ENCODE measurements at regions of chr1 and their contacts with region 1.

Region 1: GRCh38 chr1:223545343-223545742 is 120.2 kb downstream of the CAPN8 start:
- DNase-seq: no peak
- ATAC-seq: no peak
- H3K4me3 ChIP-seq: no peak overlapping the region
- H3K4me3 Mint-ChIP-seq: no peak overlapping the region
- H3K27ac ChIP-seq: no peak overlapping the region
- H3K27ac Mint-ChIP-seq: no peak overlapping the region
- H3K4me1 ChIP-seq: peaks cover 5% of the 10 kb centered on the region
- H3K4me1 Mint-ChIP-seq: peaks cover 1% of the 10 kb centered on the region
- H3K27me3 ChIP-seq: no peaks in the 10 kb centered on the region
- H3K27me3 Mint-ChIP-seq: no peaks in the 10 kb centered on the region
- CTCF ChIP-seq: no peak

Region 2: GRCh38 chr1:223500560-223501425 is 44.5 kb before region 1 on chr1:
- CTCF ChIA-PET with region 1: no interaction called
- POLR2A ChIA-PET with region 1: no interaction called
- intact Hi-C with region 1: no loop called
- DNase-seq: no peak
- ATAC-seq: no peak
- H3K4me3 ChIP-seq: no peak overlapping the region
- H3K4me3 Mint-ChIP-seq: no peak overlapping the region
- H3K27ac ChIP-seq: no peak overlapping the region
- H3K27ac Mint-ChIP-seq: no peak overlapping the region
- H3K4me1 ChIP-seq: no peaks in the 10 kb centered on the region
- H3K4me1 Mint-ChIP-seq: peaks cover 6% of the 10 kb centered on the region
- H3K27me3 ChIP-seq: no peaks in the 10 kb centered on the region
- H3K27me3 Mint-ChIP-seq: no peaks in the 10 kb centered on the region
- CTCF ChIP-seq: no peak

Region 3: DNA sequence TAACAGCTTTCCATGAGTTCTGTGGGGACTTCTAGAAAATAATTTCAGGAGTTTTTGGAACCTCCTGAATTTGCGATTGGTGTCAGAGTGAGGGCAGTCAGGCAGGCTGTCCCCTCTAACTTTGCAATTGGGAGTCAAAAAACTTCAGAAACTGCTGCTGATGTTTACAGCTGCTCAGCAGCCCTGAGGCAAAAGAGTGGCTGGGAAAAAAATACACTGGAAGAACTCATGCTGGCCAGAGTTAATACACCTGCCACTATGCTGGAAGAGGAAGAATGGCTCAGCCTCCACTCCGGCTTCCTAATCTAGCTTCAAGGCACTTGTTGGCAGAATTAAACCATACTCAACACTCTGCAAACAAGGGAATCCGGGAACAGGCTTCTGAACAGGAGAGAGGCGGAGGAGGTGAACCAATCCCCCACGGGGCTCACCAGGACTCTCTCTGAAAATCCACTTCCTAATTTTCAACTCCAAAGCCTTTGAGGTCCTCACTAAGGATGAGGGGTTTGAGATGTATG is 32.1 kb before region 1 on chr1:
- CTCF ChIA-PET with region 1: no interaction called
- POLR2A ChIA-PET with region 1: no interaction called
- intact Hi-C with region 1: no loop called
- DNase-seq: no peak
- ATAC-seq: no peak
- H3K4me3 ChIP-seq: no peak overlapping the region
- H3K4me3 Mint-ChIP-seq: no peak overlapping the region
- H3K27ac ChIP-seq: no peak overlapping the region
- H3K27ac Mint-ChIP-seq: peak overlapping the region; percentile 89
- H3K4me1 ChIP-seq: peaks cover 47% of the 10 kb centered on the region
- H3K4me1 Mint-ChIP-seq: peaks cover 58% of the 10 kb centered on the region
- H3K27me3 ChIP-seq: no peaks in the 10 kb centered on the region
- H3K27me3 Mint-ChIP-seq: no peaks in the 10 kb centered on the region
- CTCF ChIP-seq: no peak

Region 4: GRCh38 chr1:223525957-223526356 is 19.4 kb before region 1 on chr1:
- CTCF ChIA-PET with region 1: no interaction called
- POLR2A ChIA-PET with region 1: no interaction called
- intact Hi-C with region 1: loop called in 1 of 2 experiments (anchors 2 kb)
- DNase-seq: peak in 1 of 14 experiments; percentile 11
- ATAC-seq: no peak
- H3K4me3 ChIP-seq: no peak overlapping the region
- H3K4me3 Mint-ChIP-seq: no peak overlapping the region
- H3K27ac ChIP-seq: no peak overlapping the region
- H3K27ac Mint-ChIP-seq: no peak overlapping the region
- H3K4me1 ChIP-seq: peaks cover 9% of the 10 kb centered on the region
- H3K4me1 Mint-ChIP-seq: peaks cover 8% of the 10 kb centered on the region
- H3K27me3 ChIP-seq: no peaks in the 10 kb centered on the region
- H3K27me3 Mint-ChIP-seq: no peaks in the 10 kb centered on the region
- CTCF ChIP-seq: no peak

Measured in CD4-positive, alpha-beta T cell (primary cell).